Activated naive CD8-positive, alpha-beta T cell treated with anti-CD3 and anti-CD28 coated beads, Interleukin-2, amount 10 ng/mL, durations not matched to agents 7 days and 5 days (primary cell): ENCODE measurements at regions of chr6 and their contacts with region 1.

Region 1: GRCh38 chr6:106097411-106098231 is 11.5 kb downstream of the PRDM1 start:
- DNase-seq: no peak
- ATAC-seq: peak; percentile 65
- H3K4me3 Mint-ChIP-seq: peak overlapping the region; percentile 90
- H3K27ac Mint-ChIP-seq: peak overlapping the region; percentile 94
- H3K4me1 Mint-ChIP-seq: peaks cover 59% of the 10 kb centered on the region
- H3K27me3 Mint-ChIP-seq: peaks cover 2% of the 10 kb centered on the region

Region 2: DNA sequence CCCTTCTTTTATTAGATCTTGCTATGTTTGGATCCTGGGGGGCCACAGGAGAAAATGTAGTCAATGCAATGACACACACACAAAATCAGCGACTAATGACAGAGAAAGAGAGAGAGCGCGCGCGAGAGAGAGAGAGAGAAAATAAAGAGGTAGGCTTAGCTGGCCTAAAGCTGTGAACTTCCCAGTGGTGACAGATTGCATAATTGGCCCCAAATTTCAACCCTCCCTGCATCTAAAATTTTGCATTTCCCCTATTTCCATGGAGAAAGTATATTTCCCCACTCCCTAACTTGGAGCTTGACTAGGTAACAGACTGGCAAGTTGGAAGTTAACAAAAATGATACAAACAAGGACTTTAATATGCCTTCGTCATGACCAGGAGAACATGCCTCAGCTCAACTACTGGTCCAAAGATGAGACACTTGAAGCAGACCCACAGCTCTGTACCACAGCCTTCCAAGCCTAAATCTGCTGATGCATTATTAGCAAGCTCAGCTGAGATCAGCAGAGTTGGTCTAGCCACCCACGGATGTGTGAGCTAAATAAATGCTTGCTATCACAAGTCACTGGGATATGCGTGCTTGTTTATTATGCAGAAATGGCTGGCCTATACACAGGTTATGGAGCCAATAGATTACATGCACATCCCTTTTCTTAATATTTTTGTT is 129.6 kb before region 1 on chr6:
- POLR2A ChIA-PET with region 1: no interaction called
- DNase-seq: no peak
- ATAC-seq: no peak
- H3K4me3 Mint-ChIP-seq: no peak overlapping the region
- H3K27ac Mint-ChIP-seq: no peak overlapping the region
- H3K4me1 Mint-ChIP-seq: no peaks in the 10 kb centered on the region
- H3K27me3 Mint-ChIP-seq: peaks cover 25% of the 10 kb centered on the region

Region 3: DNA sequence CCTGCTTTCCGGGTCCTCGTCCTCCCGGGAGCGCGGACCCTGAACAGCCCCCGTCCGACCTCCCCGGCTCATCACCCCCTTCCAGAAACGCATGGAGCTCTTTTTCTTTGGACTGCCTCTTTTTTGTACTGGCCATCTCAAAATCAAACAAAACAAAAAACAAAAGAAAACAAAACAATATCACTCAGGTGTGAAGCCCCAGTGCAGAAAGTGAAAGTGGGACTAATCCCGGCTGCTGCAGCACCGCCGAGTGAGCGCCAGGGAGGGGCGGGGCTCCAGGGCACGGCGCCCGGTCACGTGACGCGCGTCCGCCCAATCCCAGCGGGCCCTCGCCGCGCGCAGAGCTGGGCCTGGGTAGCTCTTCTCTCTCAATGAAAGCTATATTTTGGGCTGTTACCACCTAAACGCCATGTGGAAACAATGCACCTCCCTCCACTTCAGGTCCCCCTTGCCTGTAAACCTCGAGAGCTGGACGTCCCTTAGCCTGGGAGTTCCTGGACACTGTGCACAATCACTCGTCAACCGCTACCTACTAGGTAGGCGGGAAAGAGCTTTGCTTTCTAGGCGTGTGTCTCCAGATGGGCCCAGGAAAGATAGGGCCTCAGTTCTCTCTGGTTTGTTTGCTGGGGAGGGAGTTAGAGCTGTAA is 105.2 kb before region 1 on chr6:
- POLR2A ChIA-PET with region 1: interaction called, 12 read pairs
- DNase-seq: peak; percentile 95
- ATAC-seq: peak; percentile 93
- H3K4me3 Mint-ChIP-seq: peak overlapping the region; percentile 84
- H3K27ac Mint-ChIP-seq: peak overlapping the region; percentile 79
- H3K4me1 Mint-ChIP-seq: peaks cover 29% of the 10 kb centered on the region
- H3K27me3 Mint-ChIP-seq: peaks cover 76% of the 10 kb centered on the region

Region 4: DNA sequence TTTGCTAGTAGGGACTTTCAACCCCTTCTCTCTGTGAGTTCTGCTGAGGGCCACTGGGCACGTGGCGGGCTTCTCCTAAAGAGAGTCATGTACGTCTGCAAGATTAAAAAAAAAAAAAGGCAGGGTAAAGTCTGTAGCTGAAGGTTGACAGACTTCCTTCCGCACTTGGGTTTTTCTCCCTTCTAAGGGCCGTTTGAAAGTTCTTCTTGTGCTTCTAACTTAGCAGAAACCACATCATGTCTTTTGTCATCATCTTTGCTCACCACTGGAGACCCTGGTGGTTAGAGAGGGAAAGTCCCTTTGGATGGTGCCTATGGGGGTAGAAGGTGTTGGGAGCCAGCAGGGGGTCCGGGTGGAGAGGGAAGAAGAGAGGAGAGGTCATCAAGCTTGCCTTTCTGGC is 20.0 kb after region 1 on chr6:
- POLR2A ChIA-PET with region 1: interaction called, 19 read pairs
- DNase-seq: no peak
- ATAC-seq: peak; percentile 92
- H3K4me3 Mint-ChIP-seq: peak overlapping the region; percentile 68
- H3K27ac Mint-ChIP-seq: peak overlapping the region; percentile 78
- H3K4me1 Mint-ChIP-seq: peaks cover 58% of the 10 kb centered on the region
- H3K27me3 Mint-ChIP-seq: no peaks in the 10 kb centered on the region

Region 5: DNA sequence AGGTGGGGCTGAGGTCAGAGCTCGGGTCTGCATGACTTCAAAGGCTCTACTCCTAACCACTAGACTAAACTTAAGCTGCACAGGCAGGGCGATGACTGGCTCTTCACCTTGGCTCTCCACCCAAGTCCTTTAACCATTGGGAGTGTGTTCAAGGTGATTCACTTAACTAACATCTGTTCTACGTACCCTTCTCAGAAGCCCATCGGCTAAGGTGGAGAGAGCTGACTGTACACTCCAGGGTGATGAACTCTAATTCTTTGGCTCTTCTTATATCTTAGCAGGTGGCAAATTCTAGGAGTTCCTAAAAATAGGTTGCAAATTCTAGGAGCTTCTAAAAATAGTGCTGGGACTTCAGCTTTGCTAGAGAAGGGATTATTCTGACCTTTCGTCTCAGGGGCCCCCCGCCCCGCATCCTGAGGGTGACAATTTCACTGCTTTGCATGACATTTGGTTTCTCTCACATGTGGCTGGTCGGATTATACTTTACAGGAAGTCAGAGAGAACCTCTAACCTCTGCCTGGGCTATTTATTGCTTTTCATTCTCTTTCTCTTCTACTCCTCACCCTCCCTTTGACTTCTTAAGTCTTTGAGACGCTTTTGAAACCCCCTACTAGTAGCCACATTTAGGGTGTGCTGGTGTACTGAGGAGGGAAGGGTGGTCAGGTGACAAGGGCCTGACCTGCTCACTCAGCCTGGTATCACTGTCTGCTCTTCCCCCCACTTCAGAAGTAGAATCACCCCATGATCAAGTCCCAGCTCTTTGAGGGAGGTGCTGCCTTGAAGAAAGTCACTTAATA is 44.0 kb after region 1 on chr6:
- POLR2A ChIA-PET with region 1: interaction called, 59 read pairs
- DNase-seq: peak; percentile 73
- ATAC-seq: peak; percentile 85
- H3K4me3 Mint-ChIP-seq: peak overlapping the region; percentile 70
- H3K27ac Mint-ChIP-seq: peak overlapping the region; percentile 97
- H3K4me1 Mint-ChIP-seq: peaks cover 56% of the 10 kb centered on the region
- H3K27me3 Mint-ChIP-seq: no peaks in the 10 kb centered on the region

Region 6: GRCh38 chr6:106163446-106163965 is 65.9 kb after region 1 on chr6:
- POLR2A ChIA-PET with region 1: interaction called, 10 read pairs
- DNase-seq: no peak
- ATAC-seq: peak; percentile 76
- H3K4me3 Mint-ChIP-seq: peak overlapping the region; percentile 64
- H3K27ac Mint-ChIP-seq: peak overlapping the region; percentile 94
- H3K4me1 Mint-ChIP-seq: peaks cover 47% of the 10 kb centered on the region
- H3K27me3 Mint-ChIP-seq: no peaks in the 10 kb centered on the region